ENCODE measurements at regions of chr9 and their contacts with region 1.

Region 1: DNA sequence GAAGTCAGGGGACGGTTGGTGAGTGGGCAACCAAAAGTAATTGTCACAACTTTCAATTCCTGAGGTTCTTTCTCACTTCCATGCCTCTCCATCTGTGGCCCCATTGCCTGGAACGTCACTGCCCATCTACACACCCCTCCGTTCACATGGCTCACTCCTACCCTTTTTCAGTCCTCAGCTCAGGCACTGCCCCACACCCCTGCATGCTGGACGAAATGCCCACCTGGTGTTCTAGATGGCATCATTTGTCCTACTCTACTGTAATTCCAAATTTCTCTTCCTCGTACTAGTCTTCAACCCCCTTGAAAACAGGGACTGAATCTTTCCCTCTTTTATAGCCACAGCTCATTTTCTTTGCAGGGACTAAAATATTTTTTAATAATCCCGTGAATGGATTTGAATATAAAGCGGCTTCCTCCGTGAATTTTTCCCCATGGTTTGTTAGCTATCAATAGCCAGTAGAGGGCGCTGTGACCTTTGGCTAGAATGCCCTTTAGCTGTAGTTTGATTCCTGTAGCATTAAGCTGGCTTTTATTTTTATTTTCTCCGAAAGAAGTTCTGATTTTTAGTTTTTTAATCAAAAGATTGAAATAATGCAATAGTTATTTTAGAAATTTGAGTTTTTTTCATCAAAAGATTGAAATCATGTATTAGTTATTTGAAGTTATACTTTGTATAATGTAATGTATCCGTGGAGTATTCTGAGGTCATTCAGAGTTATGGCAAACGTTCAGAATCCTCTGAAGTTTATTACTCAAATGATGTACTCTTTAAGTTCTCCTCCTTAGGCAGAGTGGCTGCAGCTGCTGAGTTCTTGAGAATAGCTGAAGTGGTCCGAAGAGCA is 232.1 kb downstream of the SH3GL2 start:
- DNase-seq: peak; percentile 50
- H3K4me3 ChIP-seq: peak overlapping the region in 1 of 2 experiments; percentile 10; a peak in 1 of 4 replicates
- H3K27ac ChIP-seq: no peak overlapping the region
- H3K4me1 ChIP-seq: no peaks in the 10 kb centered on the region; a peak in 1 of 4 replicates
- H3K27me3 ChIP-seq: peaks cover 30% of the 10 kb centered on the region; the same call in 1 of the 2 replicates
- CTCF ChIP-seq: peak; percentile 97
- EP300 ChIP-seq: no peak
- RAD21 ChIP-seq: peak; percentile 85

Region 2: GRCh38 chr9:17793713-17794622 is 17.0 kb before region 1 on chr9:
- CTCF ChIA-PET with region 1: interaction called, 26 read pairs
- POLR2A ChIA-PET with region 1: no interaction called
- DNase-seq: no peak
- H3K4me3 ChIP-seq: no peak overlapping the region
- H3K27ac ChIP-seq: no peak overlapping the region
- H3K4me1 ChIP-seq: no peaks in the 10 kb centered on the region
- H3K27me3 ChIP-seq: peaks cover 12% of the 10 kb centered on the region; the same call in 1 of the 2 replicates
- CTCF ChIP-seq: peak; percentile 59
- EP300 ChIP-seq: no peak
- RAD21 ChIP-seq: peak; percentile 31; the same call in 1 of the 2 replicates

Region 3: GRCh38 chr9:17824191-17824590 is 13.2 kb after region 1 on chr9:
- CTCF ChIA-PET with region 1: interaction called, 14 read pairs
- POLR2A ChIA-PET with region 1: no interaction called
- DNase-seq: no peak
- H3K4me3 ChIP-seq: no peak overlapping the region
- H3K27ac ChIP-seq: 0 out of 4 replicates have a peak overlapping the region, but pooled peaks of 1 of the 2 experiments have one; percentile 37
- H3K4me1 ChIP-seq: no peaks in the 10 kb centered on the region
- H3K27me3 ChIP-seq: no peaks in the 10 kb centered on the region
- CTCF ChIP-seq: peak; percentile 15; the same call in 1 of the 2 replicates
- EP300 ChIP-seq: no peak
- RAD21 ChIP-seq: no peak

Region 4: DNA sequence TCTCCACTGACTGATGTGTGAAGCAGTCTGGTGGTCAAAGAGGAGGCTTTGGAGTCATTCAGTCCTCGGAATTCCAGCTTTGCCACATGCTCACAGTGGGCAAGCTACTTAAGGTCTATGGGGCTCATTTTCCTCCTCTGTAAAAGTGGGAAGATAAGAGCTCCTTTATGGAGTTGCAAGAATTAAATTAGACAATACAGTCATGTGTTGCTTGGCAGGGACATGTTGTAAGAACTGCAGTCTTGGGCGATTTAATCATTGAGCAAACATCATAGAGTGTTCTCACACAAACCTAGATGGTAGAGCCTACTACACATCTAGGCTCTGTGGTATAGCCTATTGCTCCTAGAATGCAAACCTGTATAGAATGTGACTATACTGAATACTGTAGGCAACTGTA is 21.9 kb after region 1 on chr9:
- CTCF ChIA-PET with region 1: interaction called, 13 read pairs
- POLR2A ChIA-PET with region 1: no interaction called
- DNase-seq: no peak
- H3K4me3 ChIP-seq: no peak overlapping the region
- H3K27ac ChIP-seq: no peak overlapping the region
- H3K4me1 ChIP-seq: no peaks in the 10 kb centered on the region
- H3K27me3 ChIP-seq: no peaks in the 10 kb centered on the region
- CTCF ChIP-seq: no peak
- EP300 ChIP-seq: no peak
- RAD21 ChIP-seq: no peak

Region 5: DNA sequence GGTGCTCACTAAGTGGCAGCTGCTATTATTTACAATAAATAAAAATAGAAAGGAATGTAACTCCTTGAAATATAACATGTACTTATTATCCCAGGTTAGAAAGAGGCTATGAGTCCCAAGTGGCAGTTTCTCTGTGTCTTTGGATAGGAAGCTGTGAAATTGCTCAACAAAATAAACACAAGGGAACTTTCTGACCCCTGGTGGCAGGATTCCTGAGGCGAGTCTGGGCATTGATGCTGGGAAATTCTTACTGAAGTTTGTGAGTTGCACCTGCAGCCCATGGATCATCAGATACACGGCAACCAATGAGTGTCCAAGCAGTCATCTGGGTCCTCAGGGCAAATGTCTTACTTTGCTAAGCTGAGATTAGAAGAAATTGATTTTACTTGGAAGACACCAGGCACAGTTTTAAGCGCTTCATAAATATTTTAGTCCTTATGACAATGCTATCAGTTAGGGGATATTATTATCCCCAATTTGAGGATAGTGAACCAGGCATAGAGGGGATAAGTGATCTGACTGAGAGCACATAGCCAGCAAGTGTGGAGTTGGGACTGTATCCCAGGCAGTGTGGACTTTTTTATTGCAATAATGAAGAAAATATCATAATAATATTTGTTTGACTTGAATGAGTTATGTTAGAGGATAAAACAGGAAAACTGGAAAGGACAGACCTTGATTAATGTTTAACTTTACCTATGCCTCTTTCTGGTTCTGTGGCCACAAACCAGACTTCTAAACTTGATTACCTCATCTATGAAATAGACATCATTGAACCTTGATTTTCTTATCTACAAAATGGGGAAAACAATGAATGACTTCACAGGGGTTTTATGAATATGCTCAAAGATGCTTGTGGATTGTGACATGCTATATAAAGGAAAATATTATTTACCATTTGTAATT is 397.5 kb after region 1 on chr9:
- CTCF ChIA-PET with region 1: interaction called, 67 read pairs
- POLR2A ChIA-PET with region 1: no interaction called
- DNase-seq: peak; percentile 6
- H3K4me3 ChIP-seq: no peak overlapping the region; a peak in 1 of 4 replicates
- H3K27ac ChIP-seq: no peak overlapping the region
- H3K4me1 ChIP-seq: no peaks in the 10 kb centered on the region
- H3K27me3 ChIP-seq: peaks cover 8% of the 10 kb centered on the region; the same call in 1 of the 2 replicates
- CTCF ChIP-seq: peak; percentile 69
- EP300 ChIP-seq: no peak
- RAD21 ChIP-seq: peak; percentile 43

Region 6: DNA sequence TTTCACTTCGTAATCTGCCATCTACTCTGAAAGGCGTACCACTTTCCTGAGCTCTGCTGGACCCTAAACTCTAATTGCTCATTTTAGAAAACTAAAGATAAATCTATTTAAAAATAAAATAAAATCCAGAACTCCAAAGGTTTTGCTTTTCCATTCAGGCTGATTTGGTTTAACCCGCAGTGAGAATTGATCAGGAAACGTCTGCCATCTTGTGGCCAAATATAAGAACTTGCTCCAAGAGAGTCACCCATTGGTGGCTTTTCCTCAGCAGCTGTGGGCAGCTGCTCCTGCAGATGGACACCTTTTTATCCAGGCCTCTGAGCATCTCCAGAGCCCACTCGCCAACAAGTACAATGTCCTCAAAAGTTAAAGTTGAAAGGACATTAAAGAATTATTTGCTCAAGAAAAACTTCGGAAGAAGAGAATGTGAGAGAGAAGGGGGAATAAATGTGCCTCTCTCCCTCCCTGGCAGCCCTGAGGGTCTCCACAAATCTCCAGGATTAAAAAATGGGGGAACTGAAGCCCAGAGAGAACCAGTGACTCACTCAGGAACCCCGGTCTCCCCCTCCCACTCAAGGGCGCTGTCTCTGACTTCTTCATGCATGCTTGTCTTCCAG is 1218.0 kb after region 1 on chr9:
- CTCF ChIA-PET with region 1: interaction called, 18 read pairs
- POLR2A ChIA-PET with region 1: no interaction called
- DNase-seq: peak; percentile 81
- H3K4me3 ChIP-seq: peak overlapping the region in 1 of 2 experiments; percentile 8; a peak in 1 of 4 replicates
- H3K27ac ChIP-seq: no peak overlapping the region
- H3K4me1 ChIP-seq: no peaks in the 10 kb centered on the region; a peak in 1 of 4 replicates
- H3K27me3 ChIP-seq: no peaks in the 10 kb centered on the region
- CTCF ChIP-seq: peak; percentile 79
- EP300 ChIP-seq: no peak
- RAD21 ChIP-seq: peak; percentile 89

Measured in SK-N-SH (cell line).